Aorta (tissue), 5 donors: ENCODE measurements at regions of chr11 and their contacts with region 1.

Region 1: DNA sequence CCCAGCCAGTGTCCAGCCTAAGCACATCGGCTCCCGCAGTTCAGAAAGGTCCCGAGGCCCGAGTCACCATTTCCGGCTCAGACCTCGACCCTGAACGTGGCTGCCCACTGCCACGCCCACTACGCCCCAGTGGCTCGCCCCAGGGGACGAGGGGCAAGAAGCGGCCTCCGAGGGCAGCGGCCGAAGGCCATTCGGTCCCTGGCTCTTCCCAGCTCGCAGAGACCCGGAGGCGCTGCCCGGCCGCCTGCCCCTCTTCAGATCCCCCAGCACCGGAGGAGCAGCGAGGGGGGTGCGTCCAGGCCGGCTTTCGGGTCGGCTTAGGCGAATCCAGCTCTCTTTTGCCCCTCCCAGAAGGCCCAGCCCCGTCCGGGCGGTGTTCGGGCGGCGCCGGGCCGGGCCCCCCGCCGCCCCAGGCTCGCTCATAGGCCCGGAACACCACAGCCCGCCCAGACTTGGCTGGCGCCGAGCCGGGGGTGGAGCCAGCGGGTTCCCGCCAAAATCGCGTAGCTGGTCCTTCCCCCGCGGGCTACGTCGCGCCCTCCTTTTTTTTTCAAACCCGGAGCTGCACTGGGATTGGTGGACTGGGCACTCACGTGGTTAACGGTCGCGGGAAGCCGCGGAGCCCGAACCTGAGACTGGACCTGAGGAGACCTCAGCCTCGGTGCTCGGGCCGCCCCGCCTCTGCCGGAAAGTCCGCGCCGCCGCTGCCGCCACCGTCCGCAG is at the start of gene WEE1:
- DNase-seq: peak; percentile 99
- ATAC-seq: peak; percentile 97
- H3K4me3 ChIP-seq: peak within 1 kb of the TSS; percentile 73 to 98
- H3K27ac ChIP-seq: peak within 1 kb of the TSS; percentile 89 to 93
- H3K4me1 ChIP-seq: no peaks in the 10 kb centered on the region
- H3K27me3 ChIP-seq: no peaks in the 10 kb centered on the region
- total RNA-seq, gene WEE1: 19.5 to 41.3 TPM

Region 2: GRCh38 chr11:9460322-9461067 is 112.7 kb before region 1 on chr11 and contains the start of gene ZNF143:
- intact Hi-C with region 1: loop called in 1 of 2 experiments (anchors 2 kb)
- DNase-seq: peak; percentile 100
- ATAC-seq: peak; percentile 98
- H3K4me3 ChIP-seq: peak within 1 kb of the TSS; percentile 73 to 99
- H3K27ac ChIP-seq: peak within 1 kb of the TSS; percentile 84 to 99
- H3K4me1 ChIP-seq: peaks cover 0 to 2% of the 10 kb centered on the region in 2 donors
- H3K27me3 ChIP-seq: no peaks in the 10 kb centered on the region
- total RNA-seq, gene ZNF143: 40.1 to 42.0 TPM

Region 3: GRCh38 chr11:9527481-9528140 is 45.6 kb before region 1 on chr11:
- intact Hi-C with region 1: loop called (anchors 5 kb)
- DNase-seq: no peak
- ATAC-seq: peak; percentile 72
- H3K4me3 ChIP-seq: no peak overlapping the region
- H3K27ac ChIP-seq: peak overlapping the region in 1 of 2 donors; percentile 69
- H3K4me1 ChIP-seq: no peaks in the 10 kb centered on the region
- H3K27me3 ChIP-seq: no peaks in the 10 kb centered on the region

Region 4: DNA sequence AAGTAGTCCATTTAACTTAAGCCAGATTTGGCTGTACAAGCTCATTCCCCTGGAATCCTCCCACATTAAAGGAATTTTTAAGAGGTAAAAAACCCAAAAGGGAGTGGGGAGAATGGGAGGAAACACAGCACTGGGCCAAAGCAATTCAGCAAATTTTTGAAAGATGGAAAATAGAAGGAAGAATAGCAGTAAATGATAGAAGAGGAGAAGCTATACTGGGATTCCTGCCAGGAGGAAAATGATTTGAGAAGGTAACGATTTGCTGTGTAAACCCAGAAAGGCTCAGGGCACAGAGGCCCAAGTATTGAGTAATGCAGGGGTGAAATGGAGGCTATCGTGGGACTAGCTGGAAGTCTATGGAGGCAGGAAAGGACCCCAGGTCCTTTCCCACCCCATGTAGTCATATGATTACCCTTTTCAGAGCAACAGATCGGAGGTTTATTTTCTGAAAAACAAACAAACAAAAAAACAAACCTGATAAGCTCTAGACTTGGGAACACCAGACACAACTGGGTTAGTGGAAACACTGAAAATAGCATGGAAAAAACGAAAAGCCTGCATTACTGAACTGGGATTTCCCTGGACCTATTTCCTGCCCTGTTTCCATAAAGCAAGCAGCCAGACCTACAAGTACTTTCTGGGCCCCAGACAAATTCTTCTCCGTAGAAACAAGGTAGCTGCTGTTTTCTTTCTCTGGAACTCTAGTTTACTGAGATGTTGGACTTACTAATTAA is 230.6 kb after region 1 on chr11:
- intact Hi-C with region 1: no loop called
- DNase-seq: no peak
- ATAC-seq: no peak
- H3K4me3 ChIP-seq: no peak overlapping the region
- H3K27ac ChIP-seq: peak overlapping the region; percentile 76 to 82
- H3K4me1 ChIP-seq: peaks cover 4 to 12% of the 10 kb centered on the region in 2 donors
- H3K27me3 ChIP-seq: no peaks in the 10 kb centered on the region